ENCODE measurements at regions of chr1 and their contacts with region 1.

Region 1: GRCh38 chr1:152189657-152190442 is 30.8 kb upstream of the RPTN start:
- DNase-seq: peak; percentile 67
- ATAC-seq: peak; percentile 72
- H3K4me3 ChIP-seq: peak overlapping the region; percentile 63 to 76
- H3K27ac ChIP-seq: peak overlapping the region; percentile 80
- H3K4me1 ChIP-seq: peaks cover 3% of the 10 kb centered on the region; the same call in 1 of the 2 replicates
- H3K27me3 ChIP-seq: no peaks in the 10 kb centered on the region
- CTCF ChIP-seq: peak; percentile 89

Region 2: DNA sequence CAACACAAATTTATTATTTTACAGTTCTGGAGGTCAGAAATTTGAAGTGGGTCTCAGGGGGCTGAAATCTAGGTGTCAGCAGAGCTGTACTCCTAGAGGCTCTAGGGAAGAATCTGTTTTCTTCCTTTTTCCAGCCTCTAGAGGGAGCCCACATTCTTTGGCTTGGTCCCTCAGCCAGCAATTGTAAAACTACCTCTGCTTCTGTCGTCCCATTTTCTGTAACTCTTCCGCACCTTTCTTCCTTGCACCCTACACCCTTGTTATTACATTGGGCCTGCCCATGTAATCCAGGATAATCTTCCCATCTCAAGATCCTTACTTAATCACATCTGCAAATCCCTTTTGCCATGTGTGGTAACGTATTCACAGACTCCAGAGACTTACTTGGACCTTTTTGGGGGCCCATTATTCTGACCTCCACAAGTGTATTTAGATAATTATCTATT is 255.8 kb before region 1 on chr1:
- CTCF ChIA-PET with region 1: no interaction called
- POLR2A ChIA-PET with region 1: no interaction called
- in situ Hi-C with region 1: no loop called
- intact Hi-C with region 1: loop called (anchors 10 kb)
- DNase-seq: no peak
- ATAC-seq: peak; percentile 94
- H3K4me3 ChIP-seq: no peak overlapping the region
- H3K27ac ChIP-seq: peak overlapping the region; percentile 81
- H3K4me1 ChIP-seq: peaks cover 32% of the 10 kb centered on the region
- H3K27me3 ChIP-seq: no peaks in the 10 kb centered on the region
- CTCF ChIP-seq: peak; percentile 94

Region 3: GRCh38 chr1:152141974-152142584 is 47.8 kb before region 1 on chr1:
- CTCF ChIA-PET with region 1: interaction called, 4 read pairs
- POLR2A ChIA-PET with region 1: no interaction called
- in situ Hi-C with region 1: no loop called
- intact Hi-C with region 1: loop called (anchors 1 kb)
- DNase-seq: peak; percentile 41
- ATAC-seq: peak; percentile 94
- H3K4me3 ChIP-seq: no peak overlapping the region
- H3K27ac ChIP-seq: no peak overlapping the region
- H3K4me1 ChIP-seq: no peaks in the 10 kb centered on the region
- H3K27me3 ChIP-seq: peaks cover 4% of the 10 kb centered on the region
- CTCF ChIP-seq: peak; percentile 86

Region 4: DNA sequence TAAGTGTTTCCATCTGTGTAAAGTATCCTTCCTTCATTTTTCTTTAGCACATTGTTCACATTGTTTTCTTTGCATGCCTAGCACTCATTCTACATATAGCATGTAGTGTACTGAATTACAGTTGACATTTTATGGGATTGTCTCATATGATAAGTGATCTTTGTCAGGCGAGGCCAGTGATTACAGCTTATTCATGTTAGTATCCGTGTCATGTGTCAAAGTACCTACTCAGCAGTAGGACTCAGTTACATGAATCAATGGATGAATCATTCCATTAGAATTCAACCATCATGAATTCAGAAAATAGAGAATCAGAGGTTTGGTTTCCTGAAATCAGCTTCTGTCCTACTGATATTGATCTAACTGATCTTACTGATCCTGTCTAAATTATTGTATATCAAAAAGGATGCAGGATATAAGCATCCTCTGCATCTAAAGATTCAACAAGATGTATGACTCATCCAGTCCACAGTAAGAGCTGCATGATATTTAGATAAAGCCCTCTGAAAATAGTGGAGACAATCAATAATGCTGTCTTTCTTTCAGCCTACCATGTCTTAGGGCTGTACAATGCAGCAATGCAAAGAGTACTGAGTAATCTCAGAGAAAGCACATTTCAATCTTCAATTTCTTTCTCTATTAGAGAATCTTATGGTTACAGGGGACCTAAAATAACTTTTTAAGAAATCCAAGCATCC is 54.9 kb after region 1 on chr1:
- CTCF ChIA-PET with region 1: no interaction called
- POLR2A ChIA-PET with region 1: no interaction called
- in situ Hi-C with region 1: no loop called
- intact Hi-C with region 1: no loop called
- DNase-seq: no peak
- ATAC-seq: no peak
- H3K4me3 ChIP-seq: no peak overlapping the region
- H3K27ac ChIP-seq: no peak overlapping the region
- H3K4me1 ChIP-seq: no peaks in the 10 kb centered on the region
- H3K27me3 ChIP-seq: no peaks in the 10 kb centered on the region
- CTCF ChIP-seq: no peak

Region 5: DNA sequence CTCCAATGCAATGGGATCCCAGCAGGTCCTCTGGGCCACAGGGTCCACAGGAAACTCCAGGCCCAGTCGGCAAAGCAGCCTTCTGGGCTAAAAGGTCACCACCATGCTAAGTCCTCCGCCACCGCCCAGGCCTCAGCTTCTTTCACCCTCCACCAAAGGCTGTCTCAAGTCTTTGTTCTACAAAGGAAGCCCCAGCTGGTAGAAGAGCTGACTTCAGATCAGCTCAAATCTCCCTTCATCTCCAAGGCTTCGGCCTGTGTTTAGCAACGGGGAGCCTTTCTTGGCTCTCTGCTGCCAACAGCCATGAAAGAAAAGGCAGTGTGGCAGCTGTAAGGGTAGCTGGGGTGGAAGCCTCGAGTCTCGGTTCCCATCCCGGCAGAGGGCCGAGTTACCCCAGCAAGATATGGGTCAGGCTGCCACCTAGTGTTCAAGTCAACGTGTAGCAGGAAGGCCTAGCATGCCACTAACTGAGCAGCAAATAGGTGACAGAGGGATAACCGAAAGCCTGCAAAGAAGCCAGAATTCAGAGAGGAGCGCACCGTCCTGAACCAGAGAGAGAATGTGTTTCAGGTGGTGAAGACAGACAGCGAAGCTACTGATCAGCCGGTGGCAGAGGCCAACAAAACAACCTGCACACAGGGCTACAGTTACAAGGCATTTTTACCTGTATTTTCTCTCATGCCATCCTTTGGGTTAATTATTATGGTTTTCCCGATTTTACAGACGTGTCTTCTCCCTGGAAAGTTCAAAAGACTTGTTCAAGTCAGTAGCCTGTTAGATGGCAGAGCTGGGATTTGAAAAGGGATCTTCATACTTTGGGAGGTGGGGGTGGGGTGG is 251.0 kb after region 1 on chr1:
- CTCF ChIA-PET with region 1: no interaction called
- POLR2A ChIA-PET with region 1: no interaction called
- in situ Hi-C with region 1: no loop called
- intact Hi-C with region 1: loop called (anchors 1 kb)
- DNase-seq: peak; percentile 63
- ATAC-seq: peak; percentile 99
- H3K4me3 ChIP-seq: no peak overlapping the region
- H3K27ac ChIP-seq: no peak overlapping the region
- H3K4me1 ChIP-seq: no peaks in the 10 kb centered on the region
- H3K27me3 ChIP-seq: 0 out of 2 replicates have a peak, but pooled peaks cover 3% of the 10 kb centered on the region
- CTCF ChIP-seq: peak; percentile 90

Region 6: GRCh38 chr1:153946622-153947241 is 1756.9 kb after region 1 on chr1 and contains the start of gene DENND4B:
- CTCF ChIA-PET with region 1: interaction called, 10 read pairs
- POLR2A ChIA-PET with region 1: no interaction called
- in situ Hi-C with region 1: no loop called
- intact Hi-C with region 1: no loop called
- DNase-seq: no peak
- ATAC-seq: peak; percentile 95
- H3K4me3 ChIP-seq: peak within 1 kb of the TSS; percentile 77 to 78
- H3K27ac ChIP-seq: peak within 1 kb of the TSS; percentile 78
- H3K4me1 ChIP-seq: peaks cover 14% of the 10 kb centered on the region
- H3K27me3 ChIP-seq: no peaks in the 10 kb centered on the region
- CTCF ChIP-seq: peak; percentile 99
- total RNA-seq, gene DENND4B: 56.2 TPM